Activated B cell treated with CpG ODN at 0.5 μM for 24 hours (primary cell): ENCODE measurements at regions of chr20 and their contacts with region 1.

Region 1: DNA sequence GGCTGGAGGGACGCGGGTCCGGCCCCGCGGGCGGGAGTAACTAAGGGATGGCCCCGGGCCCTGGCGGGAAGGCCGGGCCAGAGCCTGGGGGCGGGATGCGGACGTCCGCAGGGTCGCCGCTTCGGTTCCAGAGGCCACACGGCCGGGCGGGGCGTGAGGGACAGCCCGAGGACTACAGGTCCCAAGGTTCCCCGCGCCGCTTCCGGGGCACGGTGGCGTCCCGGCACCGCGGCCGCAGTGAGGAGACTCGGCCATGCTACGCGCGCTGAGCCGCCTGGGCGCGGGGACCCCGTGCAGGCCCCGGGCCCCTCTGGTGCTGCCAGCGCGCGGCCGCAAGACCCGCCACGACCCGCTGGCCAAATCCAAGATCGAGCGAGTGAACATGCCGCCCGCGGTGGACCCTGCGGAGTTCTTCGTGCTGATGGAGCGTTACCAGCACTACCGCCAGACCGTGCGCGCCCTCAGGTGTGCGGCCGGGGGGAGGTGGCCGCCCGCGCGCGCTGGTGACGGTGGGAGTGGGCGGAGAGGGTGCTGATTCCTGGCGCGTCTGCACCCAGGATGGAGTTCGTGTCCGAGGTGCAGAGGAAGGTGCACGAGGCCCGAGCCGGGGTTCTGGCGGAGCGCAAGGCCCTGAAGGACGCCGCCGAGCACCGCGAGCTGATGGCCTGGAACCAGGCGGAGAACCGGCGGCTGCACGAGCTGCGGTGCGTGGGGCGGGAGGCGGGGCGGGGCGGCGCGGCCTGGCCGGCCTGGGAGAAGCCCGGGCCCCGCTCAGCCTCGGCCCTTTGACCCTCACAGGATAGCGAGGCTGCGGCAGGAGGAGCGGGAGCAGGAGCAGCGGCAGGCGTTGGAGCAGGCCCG is at the start of gene MRPS26:
- DNase-seq: peak; percentile 88
- ATAC-seq: peak; percentile 91
- H3K4me3 Mint-ChIP-seq: peak within 1 kb of the TSS; percentile 84
- H3K27ac Mint-ChIP-seq: peak within 1 kb of the TSS; percentile 89
- H3K4me1 Mint-ChIP-seq: peaks cover 14% of the 10 kb centered on the region
- H3K27me3 Mint-ChIP-seq: no peaks in the 10 kb centered on the region
- CTCF ChIP-seq: no peak
- total RNA-seq, gene MRPS26: 30.6 and 34.7 TPM in 2 replicates

Region 2: GRCh38 chr20:1118336-1119127 is 1927.5 kb before region 1 on chr20 and contains the start of gene PSMF1:
- CTCF ChIA-PET with region 1: no interaction called
- POLR2A ChIA-PET with region 1: no interaction called
- intact Hi-C with region 1: loop called (anchors 5 kb)
- DNase-seq: peak; percentile 98
- ATAC-seq: peak; percentile 94
- H3K4me3 Mint-ChIP-seq: peak within 1 kb of the TSS; percentile 93
- H3K27ac Mint-ChIP-seq: peak within 1 kb of the TSS; percentile 85
- H3K4me1 Mint-ChIP-seq: peaks cover 64% of the 10 kb centered on the region
- H3K27me3 Mint-ChIP-seq: no peaks in the 10 kb centered on the region
- CTCF ChIP-seq: no peak
- total RNA-seq, gene PSMF1: 130 and 137 TPM in 2 replicates

Region 3: GRCh38 chr20:2671977-2672376 is 374.1 kb before region 1 on chr20:
- CTCF ChIA-PET with region 1: no interaction called
- POLR2A ChIA-PET with region 1: no interaction called
- intact Hi-C with region 1: no loop called
- DNase-seq: no peak
- ATAC-seq: no peak
- H3K4me3 Mint-ChIP-seq: no peak overlapping the region
- H3K27ac Mint-ChIP-seq: no peak overlapping the region
- H3K4me1 Mint-ChIP-seq: no peaks in the 10 kb centered on the region
- H3K27me3 Mint-ChIP-seq: peaks cover 13% of the 10 kb centered on the region
- CTCF ChIP-seq: no peak

Region 4: DNA sequence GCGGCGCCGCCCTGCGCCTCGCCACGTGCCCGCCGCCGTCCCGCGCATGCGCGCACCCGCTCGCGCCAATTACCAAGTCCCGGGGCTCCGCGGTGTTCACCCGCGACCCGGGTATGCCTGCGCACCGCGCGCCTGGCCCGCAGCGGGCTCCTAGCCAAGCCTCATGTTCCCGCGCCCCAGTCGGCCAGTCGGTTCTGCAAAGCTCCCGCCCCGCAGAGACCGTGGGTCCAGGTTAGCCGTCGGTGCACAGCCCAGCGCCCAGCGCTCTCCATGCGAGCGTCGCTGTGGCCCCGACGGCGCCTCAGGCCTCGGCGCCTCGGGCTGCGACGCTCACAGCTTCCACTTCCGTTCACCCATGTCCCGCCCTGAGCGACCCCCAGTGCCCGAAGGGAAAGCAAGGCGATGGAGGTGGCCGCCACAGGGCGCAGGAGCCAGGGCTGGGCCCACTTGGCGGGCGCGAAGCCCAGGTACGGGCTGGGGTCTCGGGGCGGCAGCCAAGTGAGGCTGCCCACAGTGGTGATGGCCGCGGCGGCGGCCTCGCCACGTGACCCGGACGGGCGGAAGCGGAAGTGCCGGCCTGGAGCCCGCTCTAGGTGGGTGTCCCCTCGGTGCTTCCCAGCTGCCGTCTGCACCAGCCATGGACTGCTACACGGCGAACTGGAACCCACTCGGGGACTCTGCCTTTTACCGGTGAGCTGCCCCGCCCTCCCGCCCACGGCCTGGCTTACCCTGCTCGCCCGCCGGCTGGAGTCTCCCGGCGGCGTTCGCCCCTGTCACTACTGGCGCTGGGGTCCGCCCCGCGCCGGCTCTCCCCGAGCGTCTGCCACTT is 205.7 kb before region 1 on chr20 and contains the starts of genes PCED1A and VPS16:
- CTCF ChIA-PET with region 1: no interaction called
- POLR2A ChIA-PET with region 1: no interaction called
- intact Hi-C with region 1: loop called (anchors 1 kb)
- DNase-seq: peak; percentile 96
- ATAC-seq: peak; percentile 92
- H3K4me3 Mint-ChIP-seq: peak within 1 kb of the TSS; percentile 86
- H3K27ac Mint-ChIP-seq: peak within 1 kb of the TSS; percentile 82
- H3K4me1 Mint-ChIP-seq: peaks cover 28% of the 10 kb centered on the region
- H3K27me3 Mint-ChIP-seq: no peaks in the 10 kb centered on the region
- CTCF ChIP-seq: no peak
- total RNA-seq, gene PCED1A: 53.2 and 59.1 TPM in 2 replicates
- total RNA-seq, gene VPS16: 54.7 and 56.9 TPM in 2 replicates

Region 5: GRCh38 chr20:2967841-2968240 is 78.2 kb before region 1 on chr20:
- CTCF ChIA-PET with region 1: no interaction called
- POLR2A ChIA-PET with region 1: no interaction called
- intact Hi-C with region 1: no loop called
- DNase-seq: no peak
- ATAC-seq: no peak
- H3K4me3 Mint-ChIP-seq: no peak overlapping the region
- H3K27ac Mint-ChIP-seq: no peak overlapping the region
- H3K4me1 Mint-ChIP-seq: no peaks in the 10 kb centered on the region
- H3K27me3 Mint-ChIP-seq: no peaks in the 10 kb centered on the region
- CTCF ChIP-seq: no peak

Region 6: DNA sequence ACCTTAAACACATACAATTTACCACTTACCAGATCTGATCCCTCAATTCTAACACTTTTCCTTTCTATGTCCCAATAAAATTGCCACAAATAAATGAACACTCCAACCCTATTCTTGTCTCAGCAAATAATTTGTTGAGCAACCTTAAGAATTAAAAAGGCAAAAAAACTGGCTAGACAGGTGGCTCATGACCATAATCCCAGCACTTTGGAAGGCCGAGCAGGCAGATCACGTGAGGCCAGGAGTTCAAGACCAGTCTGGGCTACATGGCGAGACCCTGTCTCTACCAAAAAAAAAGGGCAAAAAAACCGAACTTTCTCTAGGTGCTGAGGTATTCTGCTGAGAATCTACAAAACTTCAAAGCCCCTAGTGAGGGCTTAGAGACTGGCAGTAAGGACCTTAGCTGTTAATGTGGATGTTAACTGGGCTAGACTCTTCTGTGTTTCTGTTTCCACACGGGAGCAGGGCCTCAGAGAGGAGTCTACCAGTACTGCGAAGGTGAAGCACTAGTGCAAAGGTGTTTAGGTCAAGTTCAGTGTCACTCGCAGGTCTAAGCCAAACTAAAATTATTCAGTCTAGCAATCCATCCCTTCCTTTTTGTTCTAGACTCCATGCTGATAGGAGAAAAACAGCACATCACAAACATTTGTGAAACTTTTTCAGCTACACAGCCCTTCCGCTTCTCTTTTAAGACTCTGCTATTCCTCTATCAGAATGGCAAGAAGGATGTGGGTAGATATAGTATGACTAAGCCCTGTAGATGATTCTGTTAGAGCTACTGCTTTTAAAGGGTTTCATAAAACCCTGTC is 111.0 kb after region 1 on chr20:
- CTCF ChIA-PET with region 1: no interaction called
- POLR2A ChIA-PET with region 1: interaction called, 4 read pairs
- intact Hi-C with region 1: loop called (anchors 2 kb)
- DNase-seq: no peak
- ATAC-seq: peak; percentile 73
- H3K4me3 Mint-ChIP-seq: peak overlapping the region; percentile 70
- H3K27ac Mint-ChIP-seq: peak overlapping the region; percentile 80
- H3K4me1 Mint-ChIP-seq: peaks cover 62% of the 10 kb centered on the region
- H3K27me3 Mint-ChIP-seq: no peaks in the 10 kb centered on the region
- CTCF ChIP-seq: no peak

Region 7: DNA sequence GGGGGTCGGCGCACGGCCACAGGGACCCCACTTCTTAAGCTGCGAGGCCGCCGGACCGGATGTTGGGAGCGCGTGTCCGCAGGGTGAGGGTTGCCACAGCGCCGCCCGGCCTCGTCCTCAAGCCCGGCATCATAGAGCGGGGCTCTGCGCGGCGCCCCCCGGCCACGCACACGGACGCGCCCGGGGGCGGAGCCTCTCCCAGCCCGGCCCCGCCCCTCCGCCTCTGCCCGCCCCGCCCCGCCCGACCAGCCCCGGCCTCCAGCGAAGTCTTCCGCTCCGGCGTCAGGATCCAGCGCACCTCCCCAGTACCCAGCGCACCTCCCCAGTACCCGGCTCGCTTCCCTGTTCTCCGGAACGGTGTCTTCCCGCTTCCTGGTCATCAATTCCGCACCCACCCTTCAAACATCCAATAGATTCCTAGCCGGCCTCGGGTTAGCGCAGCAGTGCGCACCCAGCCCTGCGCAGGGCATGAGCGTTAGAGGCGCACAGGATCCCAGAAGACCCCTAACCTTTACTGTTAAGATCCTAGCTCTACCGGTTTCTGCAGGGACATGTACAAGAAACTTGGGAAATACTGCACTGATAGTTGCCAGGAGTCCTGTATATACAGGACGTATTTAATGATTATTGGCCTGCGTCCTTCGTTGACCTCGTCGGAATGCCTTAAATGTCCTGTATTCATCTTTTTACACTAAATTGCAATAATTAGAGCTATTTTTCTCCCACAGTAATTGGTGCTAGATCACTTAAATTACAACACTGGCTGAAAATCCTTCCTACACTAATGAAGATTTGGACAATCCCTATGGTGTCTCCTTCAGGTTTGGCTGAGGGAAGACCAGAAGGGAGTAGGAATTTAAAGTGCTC is 362.0 kb after region 1 on chr20:
- CTCF ChIA-PET with region 1: no interaction called
- POLR2A ChIA-PET with region 1: no interaction called
- intact Hi-C with region 1: loop called (anchors 2 kb)
- DNase-seq: peak; percentile 68
- ATAC-seq: peak; percentile 73
- H3K4me3 Mint-ChIP-seq: peak overlapping the region; percentile 96
- H3K27ac Mint-ChIP-seq: peak overlapping the region; percentile 91
- H3K4me1 Mint-ChIP-seq: peaks cover 21% of the 10 kb centered on the region
- H3K27me3 Mint-ChIP-seq: peaks cover 2% of the 10 kb centered on the region
- CTCF ChIP-seq: no peak